Breast epithelium (tissue), 4 donors: ENCODE measurements at regions of chr14 and their contacts with region 1.

Region 1: DNA sequence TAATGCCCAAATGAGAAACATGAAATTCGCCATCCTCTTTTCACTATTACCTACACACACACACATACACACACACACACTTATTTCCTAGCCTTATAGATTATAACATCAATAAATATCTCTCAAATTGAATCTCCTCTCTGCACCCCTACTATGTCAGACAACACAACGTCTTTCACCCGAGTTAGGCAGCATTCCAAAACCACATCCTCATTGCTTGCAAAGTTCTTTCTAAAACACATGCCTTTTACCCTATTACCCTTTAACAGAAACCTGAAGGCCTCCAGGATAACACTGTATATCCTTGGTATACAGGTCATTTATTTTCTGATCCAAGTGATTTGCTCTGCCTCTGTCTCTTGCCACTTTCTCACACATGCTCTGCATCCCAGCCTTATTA is 56.3 kb downstream of the KCNH5 start:
- DNase-seq: no peak
- H3K4me3 ChIP-seq: no peak overlapping the region
- H3K27ac ChIP-seq: no peak overlapping the region
- H3K4me1 ChIP-seq: no peaks in the 10 kb centered on the region
- H3K27me3 ChIP-seq: no peaks in the 10 kb centered on the region
- CTCF ChIP-seq: no peak
- POLR2A ChIP-seq: no peak

Region 2: GRCh38 chr14:62558451-62558850 is 430.5 kb before region 1 on chr14:
- intact Hi-C with region 1: loop called (anchors 5 kb)
- DNase-seq: no peak
- H3K4me3 ChIP-seq: no peak overlapping the region
- H3K27ac ChIP-seq: no peak overlapping the region
- H3K4me1 ChIP-seq: no peaks in the 10 kb centered on the region
- H3K27me3 ChIP-seq: no peaks in the 10 kb centered on the region
- CTCF ChIP-seq: no peak
- POLR2A ChIP-seq: no peak

Region 3: DNA sequence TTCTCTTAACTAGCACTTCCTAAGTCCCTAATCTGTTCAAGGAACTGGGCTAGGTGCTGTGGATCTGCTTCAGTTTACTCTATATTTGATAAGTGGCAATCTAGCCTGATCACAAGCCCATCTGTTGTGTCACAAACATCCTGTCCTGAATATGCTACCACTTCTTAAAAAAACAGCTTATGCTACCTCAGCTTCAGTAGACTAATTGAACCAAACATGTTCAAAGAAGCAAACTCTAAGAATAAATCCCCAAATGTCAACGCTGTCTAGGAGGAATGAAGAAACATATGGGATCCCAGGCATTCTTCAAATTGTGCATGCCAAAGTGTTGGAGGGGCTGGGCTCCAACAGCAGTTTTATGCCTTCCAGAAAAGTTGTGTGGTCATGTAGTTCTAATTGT is 66.7 kb after region 1 on chr14:
- intact Hi-C with region 1: no loop called
- DNase-seq: no peak
- H3K4me3 ChIP-seq: no peak overlapping the region
- H3K27ac ChIP-seq: no peak overlapping the region
- H3K4me1 ChIP-seq: no peaks in the 10 kb centered on the region
- H3K27me3 ChIP-seq: peaks cover 0 to 7% of the 10 kb centered on the region in 2 donors
- CTCF ChIP-seq: no peak
- POLR2A ChIP-seq: no peak